CD8-positive, alpha-beta T cell (primary cell): ENCODE measurements at regions of chr20 and their contacts with region 1.

Region 1: DNA sequence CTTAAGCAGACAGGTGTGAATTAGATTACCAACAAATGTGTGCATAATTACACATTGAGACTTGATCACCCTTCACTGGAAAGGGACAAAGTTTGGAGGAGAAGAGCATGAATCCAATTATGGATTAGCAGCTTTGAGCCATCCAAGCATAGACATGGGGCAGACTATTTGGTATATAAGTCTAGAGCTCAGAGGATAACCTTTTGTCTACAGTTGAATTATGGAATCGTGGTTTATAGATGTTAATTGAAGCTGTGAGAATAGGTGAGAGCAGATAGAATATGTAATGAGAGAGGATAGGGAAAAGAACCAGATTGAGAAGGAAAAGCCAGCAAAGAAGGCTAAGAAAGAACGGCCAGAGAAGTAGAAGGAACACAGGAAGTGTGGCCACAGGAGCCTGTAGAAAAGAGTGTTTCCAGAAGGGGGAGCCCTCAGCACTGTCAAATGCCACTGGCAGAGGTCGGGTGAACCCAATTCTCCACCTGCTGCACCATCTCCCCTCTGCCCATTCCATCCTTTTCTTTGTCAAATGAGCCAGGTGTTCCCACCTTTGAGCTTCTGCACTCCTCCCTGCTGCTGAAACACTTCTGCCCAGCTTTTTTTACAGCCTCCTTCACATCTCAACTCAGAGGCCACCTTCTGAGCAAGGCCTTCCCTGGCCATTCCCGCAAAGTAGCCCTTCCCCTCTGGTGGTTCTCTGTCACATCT is 7.3 kb downstream of the DNTTIP1 start:
- DNase-seq: peak; percentile 19 to 78 (median 66)
- ATAC-seq: peak; percentile 96
- H3K4me3 ChIP-seq: no peak overlapping the region
- H3K4me3 Mint-ChIP-seq: no peak overlapping the region
- H3K27ac ChIP-seq: peak overlapping the region in 1 of 2 experiments; percentile 31
- H3K27ac Mint-ChIP-seq: peak overlapping the region; percentile 61
- H3K4me1 ChIP-seq: peaks cover 9% of the 10 kb centered on the region
- H3K4me1 Mint-ChIP-seq: peaks cover 11% of the 10 kb centered on the region
- H3K27me3 ChIP-seq: no peaks in the 10 kb centered on the region
- H3K27me3 Mint-ChIP-seq: no peaks in the 10 kb centered on the region
- CTCF ChIP-seq: peak; percentile 73

Region 2: DNA sequence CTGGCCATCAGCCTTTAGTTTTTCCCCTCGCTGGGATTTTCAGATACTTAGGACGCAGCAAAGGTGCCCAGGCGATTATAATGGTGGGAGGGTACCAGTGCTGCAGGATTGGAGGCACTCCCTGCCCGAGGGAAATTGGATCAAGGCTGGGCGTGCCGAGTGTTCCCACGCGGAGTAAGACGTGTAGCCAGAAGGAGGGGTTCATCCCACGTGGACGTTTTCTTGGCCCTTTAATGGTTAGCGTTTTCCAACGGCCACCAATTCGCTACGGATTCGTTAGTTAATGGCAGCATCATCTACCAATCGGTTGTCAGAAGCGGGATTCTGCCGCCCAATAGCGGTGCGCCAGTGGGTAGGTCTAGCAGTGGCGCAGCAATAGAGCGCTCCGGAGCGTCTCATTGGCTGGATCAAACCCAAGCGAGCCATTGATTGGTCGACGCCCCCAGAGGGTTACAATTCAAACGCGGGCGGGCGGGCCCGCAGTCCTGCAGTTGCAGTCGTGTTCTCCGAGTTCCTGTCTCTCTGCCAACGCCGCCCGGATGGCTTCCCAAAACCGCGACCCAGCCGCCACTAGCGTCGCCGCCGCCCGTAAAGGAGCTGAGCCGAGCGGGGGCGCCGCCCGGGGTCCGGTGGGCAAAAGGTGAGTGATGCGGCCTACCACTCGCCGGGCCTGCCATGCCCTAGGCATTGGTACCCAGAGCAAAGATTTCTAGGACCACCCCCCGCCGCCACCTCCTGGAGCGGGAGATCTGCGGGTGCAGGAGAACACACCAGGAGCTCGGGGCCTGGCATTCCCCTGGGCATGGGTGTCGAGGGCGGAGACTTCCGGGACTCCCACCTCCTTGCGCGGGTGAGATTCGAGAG is 13.3 kb after region 1 on chr20 and contains the start of gene UBE2C:
- CTCF ChIA-PET with region 1: interaction called, 15 read pairs
- POLR2A ChIA-PET with region 1: interaction called, 4 read pairs
- intact Hi-C with region 1: no loop called
- DNase-seq: peak; percentile 87 to 98 (median 92)
- ATAC-seq: peak; percentile 99
- H3K4me3 ChIP-seq: peak within 1 kb of the TSS; percentile 62 to 67
- H3K4me3 Mint-ChIP-seq: peak within 1 kb of the TSS; percentile 80
- H3K27ac ChIP-seq: peak within 1 kb of the TSS in 1 of 2 experiments; percentile 51
- H3K27ac Mint-ChIP-seq: peak within 1 kb of the TSS; percentile 77
- H3K4me1 ChIP-seq: peaks cover 10% of the 10 kb centered on the region
- H3K4me1 Mint-ChIP-seq: peaks cover 10% of the 10 kb centered on the region
- H3K27me3 ChIP-seq: no peaks in the 10 kb centered on the region
- H3K27me3 Mint-ChIP-seq: no peaks in the 10 kb centered on the region
- CTCF ChIP-seq: no peak
- total RNA-seq, gene UBE2C: 0.60 TPM in 1 of 2 experiments, not detected in the other

Region 3: DNA sequence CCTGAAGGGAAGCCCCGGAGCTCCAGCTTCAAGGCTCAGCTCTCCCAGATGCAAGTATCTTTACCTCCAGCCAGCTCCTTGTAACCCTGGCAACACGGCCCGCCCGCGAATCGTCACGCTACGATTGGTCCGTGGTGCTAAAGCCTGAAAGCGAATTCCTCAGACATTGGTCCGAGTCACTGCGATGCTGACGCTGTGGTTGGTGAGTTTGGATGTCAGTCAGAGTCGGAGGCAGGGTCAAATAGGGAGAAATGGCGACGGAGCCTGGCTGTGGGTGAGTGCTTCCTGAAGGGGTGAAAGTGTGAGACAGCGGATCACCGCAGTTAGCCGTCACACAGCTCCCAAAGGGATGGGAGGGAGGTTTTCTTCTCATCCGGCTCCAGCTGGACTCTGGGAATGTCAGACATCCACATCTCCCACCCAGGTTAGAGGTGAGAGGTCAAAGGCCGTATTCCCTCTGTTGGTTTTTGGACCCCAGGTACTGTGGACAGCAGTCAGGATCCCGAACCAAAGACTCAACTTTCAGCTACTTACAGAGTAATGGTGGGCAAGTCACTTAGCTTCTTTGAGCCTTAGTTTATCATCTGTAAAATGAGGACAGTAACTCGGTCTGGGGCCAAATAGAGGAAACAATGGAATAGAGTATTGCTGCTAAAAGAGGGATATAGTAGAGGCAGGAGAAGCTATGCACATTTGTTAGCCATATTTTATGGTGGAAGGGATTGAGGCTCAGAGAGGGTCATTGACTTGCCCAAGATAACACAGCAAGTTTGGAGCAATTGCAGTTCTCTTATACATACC is 82.1 kb after region 1 on chr20 and contains the start of gene ZSWIM1:
- CTCF ChIA-PET with region 1: interaction called, 14 read pairs
- POLR2A ChIA-PET with region 1: interaction called, 3 read pairs
- intact Hi-C with region 1: loop called in 1 of 2 experiments (anchors 5 kb)
- DNase-seq: peak; percentile 96 to 100 (median 99)
- ATAC-seq: peak; percentile 97
- H3K4me3 ChIP-seq: peak within 1 kb of the TSS; percentile 71 to 82
- H3K4me3 Mint-ChIP-seq: peak within 1 kb of the TSS; percentile 91
- H3K27ac ChIP-seq: peak within 1 kb of the TSS; percentile 75 to 87
- H3K27ac Mint-ChIP-seq: peak within 1 kb of the TSS; percentile 96
- H3K4me1 ChIP-seq: peaks cover 18% of the 10 kb centered on the region
- H3K4me1 Mint-ChIP-seq: peaks cover 40% of the 10 kb centered on the region
- H3K27me3 ChIP-seq: no peaks in the 10 kb centered on the region
- H3K27me3 Mint-ChIP-seq: no peaks in the 10 kb centered on the region
- CTCF ChIP-seq: no peak
- total RNA-seq, gene ZSWIM1: 8.5 to 9.2 TPM

Region 4: DNA sequence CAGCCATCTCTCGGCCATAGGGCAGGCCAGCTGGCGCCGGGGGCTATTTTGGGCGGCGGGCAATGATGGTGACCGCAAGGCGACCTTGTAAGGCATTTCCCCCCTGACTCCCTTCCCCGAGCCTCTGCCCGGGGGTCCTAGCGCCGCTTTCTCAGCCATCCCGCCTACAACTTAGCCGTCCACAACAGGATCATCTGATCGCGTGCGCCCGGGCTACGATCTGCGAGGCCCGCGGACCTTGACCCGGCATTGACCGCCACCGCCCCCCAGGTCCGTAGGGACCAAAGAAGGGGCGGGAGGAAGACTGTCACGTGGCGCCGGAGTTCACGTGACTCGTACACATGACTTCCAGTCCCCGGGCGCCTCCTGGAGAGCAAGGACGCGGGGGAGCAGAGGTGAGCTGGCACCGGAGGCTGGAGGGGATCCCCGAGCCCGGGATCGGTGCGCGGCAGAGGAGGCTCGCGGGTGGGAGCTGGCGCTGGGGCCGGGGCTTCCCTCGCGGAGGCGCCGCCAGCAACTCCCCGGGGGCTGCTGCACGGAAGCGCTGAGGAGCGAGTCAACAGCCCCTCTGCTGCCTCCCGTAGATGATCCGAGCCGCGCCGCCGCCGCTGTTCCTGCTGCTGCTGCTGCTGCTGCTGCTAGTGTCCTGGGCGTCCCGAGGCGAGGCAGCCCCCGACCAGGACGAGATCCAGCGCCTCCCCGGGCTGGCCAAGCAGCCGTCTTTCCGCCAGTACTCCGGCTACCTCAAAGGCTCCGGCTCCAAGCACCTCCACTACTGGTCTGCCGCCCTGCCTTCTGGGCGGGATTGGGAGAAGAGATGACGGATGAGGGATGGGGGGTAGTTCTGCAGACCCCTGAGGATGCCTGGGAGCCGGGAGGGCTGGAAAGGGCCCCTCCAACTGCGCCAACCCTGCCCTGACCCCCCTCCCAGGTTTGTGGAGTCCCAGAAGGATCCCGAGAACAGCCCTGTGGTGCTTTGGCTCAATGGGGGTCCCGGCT is 92.2 kb after region 1 on chr20 and contains the starts of genes CTSA and NEURL2:
- CTCF ChIA-PET with region 1: interaction called, 7 read pairs
- POLR2A ChIA-PET with region 1: no interaction called
- intact Hi-C with region 1: loop called (anchors 1 to 5 kb)
- DNase-seq: peak; percentile 53 to 91 (median 84)
- ATAC-seq: peak; percentile 70
- H3K4me3 ChIP-seq: peak within 1 kb of the TSS; percentile 89 to 99
- H3K4me3 Mint-ChIP-seq: peak within 1 kb of the TSS; percentile 93
- H3K27ac ChIP-seq: peak within 1 kb of the TSS; percentile 46 to 60
- H3K27ac Mint-ChIP-seq: peak within 1 kb of the TSS; percentile 90
- H3K4me1 ChIP-seq: peaks cover 24% of the 10 kb centered on the region
- H3K4me1 Mint-ChIP-seq: peaks cover 35% of the 10 kb centered on the region
- H3K27me3 ChIP-seq: no peaks in the 10 kb centered on the region
- H3K27me3 Mint-ChIP-seq: no peaks in the 10 kb centered on the region
- CTCF ChIP-seq: no peak
- total RNA-seq, gene CTSA: 52.8 to 64.2 TPM
- total RNA-seq, gene NEURL2: 1.6 to 1.7 TPM

Region 5: DNA sequence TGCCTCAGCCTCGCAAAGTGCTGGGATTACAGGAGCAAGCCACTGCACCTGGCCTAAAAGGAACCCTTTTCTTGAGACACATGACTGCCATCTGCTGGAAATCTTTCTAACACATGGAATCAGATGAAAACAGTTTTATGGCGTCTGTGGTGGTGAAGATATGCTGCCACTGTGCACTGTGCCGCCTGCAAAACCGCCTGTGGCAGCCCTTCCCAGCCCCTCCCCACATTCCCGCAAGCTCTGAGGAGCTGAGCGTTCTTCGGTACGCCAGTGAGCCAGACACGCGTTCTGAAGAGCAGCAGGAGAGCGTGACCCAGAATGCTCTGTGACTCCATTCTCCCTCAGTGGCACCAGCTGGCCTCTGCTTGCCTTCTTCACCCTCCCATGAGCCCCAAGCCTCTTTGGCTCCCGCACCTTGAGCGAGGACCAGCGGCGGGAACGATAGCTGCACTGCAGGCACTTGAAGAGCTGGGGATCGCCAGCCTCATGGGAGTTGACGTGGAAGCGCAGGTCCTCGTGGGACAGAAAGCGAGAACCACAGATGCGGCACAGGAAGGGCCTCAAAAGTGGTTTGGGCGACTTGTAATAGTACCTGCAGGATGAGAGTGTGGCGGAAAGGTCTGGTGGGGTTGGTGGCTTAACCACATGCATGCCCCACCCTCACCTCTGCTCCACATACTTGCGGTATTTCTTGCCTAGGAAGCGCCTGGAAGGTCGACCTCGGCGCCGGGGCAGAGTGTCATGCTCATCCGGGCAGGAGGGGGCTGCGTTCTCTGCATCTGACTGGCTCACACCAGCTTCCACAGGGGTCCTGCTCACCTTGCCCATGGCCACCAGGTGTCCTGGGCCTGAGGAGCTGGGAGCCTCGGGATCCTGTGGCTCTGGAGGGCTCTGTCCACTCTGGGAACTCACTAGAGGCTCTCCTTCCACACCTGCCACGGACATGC is 164.2 kb after region 1 on chr20:
- CTCF ChIA-PET with region 1: interaction called, 14 read pairs
- POLR2A ChIA-PET with region 1: no interaction called
- intact Hi-C with region 1: loop called (anchors 1 kb)
- DNase-seq: peak in 2 of 9 experiments; percentile 60 to 70
- ATAC-seq: peak; percentile 69
- H3K4me3 ChIP-seq: no peak overlapping the region
- H3K4me3 Mint-ChIP-seq: no peak overlapping the region
- H3K27ac ChIP-seq: no peak overlapping the region
- H3K27ac Mint-ChIP-seq: no peak overlapping the region
- H3K4me1 ChIP-seq: no peaks in the 10 kb centered on the region
- H3K4me1 Mint-ChIP-seq: peaks cover 2% of the 10 kb centered on the region
- H3K27me3 ChIP-seq: no peaks in the 10 kb centered on the region
- H3K27me3 Mint-ChIP-seq: no peaks in the 10 kb centered on the region
- CTCF ChIP-seq: peak; percentile 19

Region 6: DNA sequence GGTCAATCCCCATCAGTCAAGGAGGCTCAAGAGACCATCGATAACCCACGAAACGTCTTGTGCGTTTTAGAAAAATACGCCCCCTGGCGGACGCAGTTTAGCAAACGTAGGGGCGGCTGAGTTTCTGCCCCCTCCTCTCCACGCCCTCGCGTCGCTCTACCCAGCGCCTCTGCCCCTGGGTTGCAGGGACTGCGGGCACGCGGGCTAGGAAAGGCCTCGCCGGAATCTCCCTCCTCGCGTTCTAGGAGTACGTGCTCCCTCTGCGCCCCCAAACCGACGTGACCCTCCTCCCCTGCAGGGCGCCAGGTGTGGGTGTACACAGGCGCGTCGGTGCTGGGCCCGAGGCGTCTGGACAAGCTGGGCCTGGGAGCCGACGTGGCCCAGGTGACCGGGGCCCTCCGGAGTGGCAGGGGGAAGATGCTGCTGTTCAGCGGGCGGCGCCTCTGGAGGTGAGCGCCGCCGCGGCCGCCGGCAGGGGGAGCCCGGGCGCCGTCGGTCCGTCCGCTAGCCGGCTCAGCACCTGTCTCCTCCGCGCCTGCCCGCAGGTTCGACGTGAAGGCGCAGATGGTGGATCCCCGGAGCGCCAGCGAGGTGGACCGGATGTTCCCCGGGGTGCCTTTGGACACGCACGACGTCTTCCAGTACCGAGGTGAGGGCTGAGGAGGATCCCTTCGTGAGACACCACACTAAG is 214.9 kb after region 1 on chr20:
- CTCF ChIA-PET with region 1: interaction called, 9 read pairs
- POLR2A ChIA-PET with region 1: no interaction called
- intact Hi-C with region 1: loop called in 1 of 2 experiments (anchors 5 kb)
- DNase-seq: peak; percentile 44 to 85 (median 73)
- ATAC-seq: peak; percentile 60
- H3K4me3 ChIP-seq: peak overlapping the region; percentile 22 to 34
- H3K4me3 Mint-ChIP-seq: peak overlapping the region; percentile 15
- H3K27ac ChIP-seq: no peak overlapping the region
- H3K27ac Mint-ChIP-seq: no peak overlapping the region
- H3K4me1 ChIP-seq: peaks cover 40% of the 10 kb centered on the region
- H3K4me1 Mint-ChIP-seq: peaks cover 46% of the 10 kb centered on the region
- H3K27me3 ChIP-seq: peaks cover 34 to 44% of the 10 kb centered on the region in 2 experiments
- H3K27me3 Mint-ChIP-seq: peaks cover 76% of the 10 kb centered on the region
- CTCF ChIP-seq: peak; percentile 94

Region 7: GRCh38 chr20:46056970-46057855 is 258.1 kb after region 1 on chr20:
- CTCF ChIA-PET with region 1: no interaction called
- POLR2A ChIA-PET with region 1: no interaction called
- intact Hi-C with region 1: no loop called
- DNase-seq: peak in 3 of 9 experiments; percentile 23 to 31 (median 25)
- ATAC-seq: no peak
- H3K4me3 ChIP-seq: no peak overlapping the region
- H3K4me3 Mint-ChIP-seq: no peak overlapping the region
- H3K27ac ChIP-seq: no peak overlapping the region
- H3K27ac Mint-ChIP-seq: no peak overlapping the region
- H3K4me1 ChIP-seq: peaks cover 34% of the 10 kb centered on the region
- H3K4me1 Mint-ChIP-seq: peaks cover 39% of the 10 kb centered on the region
- H3K27me3 ChIP-seq: peaks cover 5 to 7% of the 10 kb centered on the region in 2 experiments
- H3K27me3 Mint-ChIP-seq: peaks cover 15% of the 10 kb centered on the region
- CTCF ChIP-seq: no peak

Region 8: GRCh38 chr20:46174469-46175128 is 375.5 kb after region 1 on chr20:
- CTCF ChIA-PET with region 1: no interaction called
- POLR2A ChIA-PET with region 1: no interaction called
- intact Hi-C with region 1: loop called in 1 of 2 experiments (anchors 2 kb)
- DNase-seq: peak; percentile 42 to 78 (median 72)
- ATAC-seq: peak; percentile 91
- H3K4me3 ChIP-seq: no peak overlapping the region
- H3K4me3 Mint-ChIP-seq: no peak overlapping the region
- H3K27ac ChIP-seq: no peak overlapping the region
- H3K27ac Mint-ChIP-seq: no peak overlapping the region
- H3K4me1 ChIP-seq: no peaks in the 10 kb centered on the region
- H3K4me1 Mint-ChIP-seq: peaks cover 4% of the 10 kb centered on the region
- H3K27me3 ChIP-seq: peaks cover 7 to 16% of the 10 kb centered on the region in 2 experiments
- H3K27me3 Mint-ChIP-seq: peaks cover 64% of the 10 kb centered on the region
- CTCF ChIP-seq: peak; percentile 57